Pancreas (tissue), 10 donors: ENCODE measurements at regions of chr13 and their contacts with region 1.

Region 1: DNA sequence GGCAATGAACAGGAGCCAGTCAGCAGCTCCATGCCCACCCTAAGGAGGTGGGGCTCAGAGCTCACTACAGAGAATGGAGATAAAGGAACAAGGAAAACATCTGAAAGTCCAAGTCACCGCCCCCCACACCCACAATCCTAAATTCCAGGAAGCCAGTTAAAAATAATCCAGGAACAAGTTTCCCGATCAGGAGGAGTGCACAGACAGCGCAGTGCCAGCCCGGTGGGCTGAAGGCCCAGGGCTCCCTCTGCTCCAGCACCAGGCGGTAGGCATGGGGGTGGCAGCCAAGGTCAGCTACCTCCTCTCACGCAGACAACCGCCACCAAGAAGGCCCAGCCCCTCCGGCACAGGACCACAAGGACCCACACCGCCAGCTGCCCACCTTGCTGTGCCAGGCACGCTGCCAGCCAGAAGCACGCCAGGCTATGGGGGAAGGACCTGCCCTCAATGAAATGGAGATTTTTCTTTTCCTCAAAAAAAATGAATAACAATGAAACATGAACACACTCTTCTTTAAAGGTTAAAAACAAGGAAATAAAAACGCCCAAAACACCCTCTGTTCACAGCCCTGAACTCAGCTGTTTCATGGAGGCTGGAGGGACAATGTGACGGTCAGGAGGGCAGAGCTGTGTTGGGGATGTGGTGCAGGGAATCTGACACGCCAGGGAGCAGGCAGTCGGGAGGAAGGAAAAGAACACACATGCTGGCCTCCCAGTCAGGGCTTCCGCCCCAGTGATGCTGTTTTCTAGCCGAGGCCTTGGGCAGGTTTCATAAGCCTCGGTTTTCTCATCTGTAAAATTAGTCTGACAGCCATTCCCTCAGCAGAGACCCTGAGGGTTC is 11.0 kb downstream of the STK24 start:
- DNase-seq: peak; percentile 38 to 75 (median 52)
- ATAC-seq: peak; percentile 66 to 86 (median 80)
- H3K4me3 ChIP-seq: peak overlapping the region in 2 of 4 donors; percentile 11 to 29
- H3K27ac ChIP-seq: peak overlapping the region; percentile 31 to 91 (median 66)
- H3K4me1 ChIP-seq: peaks cover 15 to 49% (median 22%) of the 10 kb centered on the region in 3 donors
- H3K27me3 ChIP-seq: no peaks in the 10 kb centered on the region
- CTCF ChIP-seq: no peak

Region 2: DNA sequence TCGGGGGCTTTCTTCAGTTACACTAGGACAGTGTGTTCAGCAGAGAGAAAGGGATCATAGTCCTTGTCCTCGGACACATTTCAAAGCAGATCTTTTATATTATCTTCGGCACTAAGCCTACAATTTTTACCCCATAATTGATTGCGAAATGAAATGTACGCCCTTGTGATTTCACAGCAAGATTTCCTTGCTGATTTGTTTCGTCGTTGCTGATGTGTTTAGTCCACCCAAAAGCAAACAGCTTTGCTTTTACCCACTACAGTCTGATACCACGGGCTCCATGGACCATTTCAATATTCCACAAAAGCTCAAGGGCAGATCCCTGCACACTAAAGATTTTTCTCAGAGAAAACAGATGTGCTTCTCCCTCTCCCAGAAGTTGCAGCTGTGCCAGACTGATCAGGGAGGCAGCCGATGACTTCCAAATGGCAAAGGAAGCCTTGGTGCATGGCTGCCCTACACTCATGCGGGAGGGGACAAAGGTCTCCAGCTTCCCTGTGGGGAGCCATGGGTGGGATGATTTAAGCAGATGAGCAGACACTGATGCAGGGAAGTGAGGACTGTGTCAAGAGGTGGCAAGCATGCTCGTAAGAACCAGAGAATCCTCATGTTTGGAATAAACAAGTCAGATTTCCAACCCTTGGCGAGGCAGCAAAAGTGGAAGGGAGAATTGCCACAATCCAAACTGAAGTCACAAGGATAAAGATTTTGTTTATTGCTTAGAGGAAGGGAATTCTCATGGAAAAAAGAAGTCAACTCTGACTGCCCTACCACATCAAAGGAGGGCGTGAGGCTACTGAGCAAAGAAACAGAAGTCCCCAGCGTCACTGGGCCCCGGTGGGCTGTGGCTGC is 70.1 kb before region 1 on chr13:
- intact Hi-C with region 1: loop called in 1 of 3 experiments (anchors 10 kb)
- DNase-seq: no peak
- ATAC-seq: peak in 3 of 4 donors; percentile 42 to 61 (median 44)
- H3K4me3 ChIP-seq: no peak overlapping the region
- H3K27ac ChIP-seq: peak overlapping the region in 1 of 4 donors; percentile 2
- H3K4me1 ChIP-seq: peaks cover 0 to 7% (median 6%) of the 10 kb centered on the region in 3 donors
- H3K27me3 ChIP-seq: no peaks in the 10 kb centered on the region
- CTCF ChIP-seq: no peak

Region 3: GRCh38 chr13:98641075-98641474 is 75.1 kb after region 1 on chr13:
- intact Hi-C with region 1: no loop called
- DNase-seq: no peak
- ATAC-seq: no peak
- H3K4me3 ChIP-seq: no peak overlapping the region
- H3K27ac ChIP-seq: no peak overlapping the region
- H3K4me1 ChIP-seq: no peaks in the 10 kb centered on the region
- H3K27me3 ChIP-seq: no peaks in the 10 kb centered on the region
- CTCF ChIP-seq: no peak